A549 (cell line): ENCODE measurements at regions of chr9 and their contacts with region 1.

Region 1: GRCh38 chr9:95425910-95426551 is 90.7 kb downstream of the PTCH1 start:
- DNase-seq: peak; percentile 77 to 80
- ATAC-seq: peak; percentile 82 to 84
- H3K4me3 ChIP-seq: peak overlapping the region; percentile 56
- H3K27ac ChIP-seq: peak overlapping the region; percentile 91 to 96
- H3K4me1 ChIP-seq: peaks cover 6% of the 10 kb centered on the region
- CTCF ChIP-seq: no peak
- EP300 ChIP-seq: no peak
- POLR2A ChIP-seq: 0 out of 2 replicates have a peak, but pooled peaks have one; percentile 23
- RAD21 ChIP-seq: no peak; a peak in 1 of 5 replicates

Region 2: DNA sequence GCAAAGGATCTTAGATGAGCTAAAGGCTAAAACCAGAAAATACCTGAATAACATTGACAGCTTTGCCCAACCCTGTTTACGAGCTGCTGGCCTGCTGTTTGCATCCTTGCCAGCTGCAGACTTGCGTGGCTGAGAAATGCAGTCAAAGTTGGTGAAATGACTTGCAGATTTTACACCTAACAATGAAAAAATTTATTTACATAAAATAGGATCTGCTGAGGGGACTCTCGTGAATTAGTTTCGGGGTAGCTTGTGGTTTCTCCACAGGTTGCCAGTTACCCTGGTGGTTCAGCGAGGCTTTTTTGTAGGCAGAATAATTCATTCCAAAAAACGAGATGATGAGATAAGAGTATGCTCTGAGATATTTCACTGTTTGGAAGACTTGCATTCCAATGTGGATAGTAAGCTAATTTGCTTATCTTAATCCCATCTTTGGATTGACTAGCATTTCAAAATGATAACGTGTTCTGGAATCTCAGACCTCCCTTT is 42.8 kb before region 1 on chr9:
- CTCF ChIA-PET with region 1: interaction called, 3 read pairs
- POLR2A ChIA-PET with region 1: interaction called, 13 read pairs
- DNase-seq: peak; percentile 73 to 80
- ATAC-seq: peak; percentile 73 to 80; a peak in 5 of 6 replicates
- H3K4me3 ChIP-seq: no peak overlapping the region
- H3K27ac ChIP-seq: peak overlapping the region; percentile 59 to 78
- H3K4me1 ChIP-seq: peaks cover 49% of the 10 kb centered on the region
- CTCF ChIP-seq: no peak
- EP300 ChIP-seq: peak; percentile 30 to 34; a peak in 1 of 5 replicates
- POLR2A ChIP-seq: no peak
- RAD21 ChIP-seq: no peak